PC-3 (cell line): ENCODE measurements at regions of chr7 and their contacts with region 1.

Region 1: GRCh38 chr7:28955718-28956619 is 2.2 kb downstream of the TRIL start:
- DNase-seq: peak; percentile 80
- ATAC-seq: peak; percentile 64
- H3K4me3 ChIP-seq: peak overlapping the region; percentile 80
- H3K27ac ChIP-seq: no peak overlapping the region
- H3K4me1 ChIP-seq: 0 out of 2 replicates have a peak, but pooled peaks cover 9% of the 10 kb centered on the region
- H3K27me3 ChIP-seq: no peaks in the 10 kb centered on the region
- CTCF ChIP-seq: peak; percentile 58

Region 2: DNA sequence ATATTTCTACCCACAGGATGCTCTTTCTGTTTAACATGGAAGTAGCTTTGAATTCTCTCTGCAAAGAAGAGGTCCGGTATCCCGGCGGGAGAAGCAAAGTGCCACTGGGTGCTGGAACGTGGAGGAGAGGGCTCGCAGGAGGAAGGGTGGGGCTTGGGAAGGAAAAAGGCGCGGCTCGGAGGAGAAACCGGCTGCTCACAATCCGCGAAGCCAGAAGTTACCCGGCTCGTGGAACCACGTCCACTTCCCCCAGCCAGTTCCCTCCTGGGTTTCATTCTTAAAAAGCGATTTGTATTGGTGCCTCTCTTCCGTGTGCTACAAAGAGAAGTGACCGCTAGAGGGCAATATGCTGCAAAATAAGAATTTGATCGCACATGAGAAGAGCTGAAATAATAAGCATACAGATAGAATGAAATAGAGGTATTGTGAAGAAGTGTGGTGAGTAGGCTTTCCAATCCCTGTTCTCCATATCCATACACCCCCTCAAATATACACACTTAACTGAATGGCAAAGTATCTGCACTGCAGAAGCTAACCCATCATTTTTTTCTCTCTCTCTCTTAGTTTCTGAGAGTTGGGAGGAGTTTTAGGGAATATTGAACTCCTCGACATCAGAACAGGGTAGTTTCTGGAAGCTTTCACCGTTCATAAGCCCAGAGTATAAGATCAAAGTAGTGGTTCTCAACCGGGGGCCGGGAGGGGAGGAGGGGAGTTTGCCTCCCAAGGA is 28.9 kb before region 1 on chr7:
- CTCF ChIA-PET with region 1: interaction called, 31 read pairs
- POLR2A ChIA-PET with region 1: no interaction called
- intact Hi-C with region 1: loop called (anchors 2 kb)
- DNase-seq: peak; percentile 96
- ATAC-seq: peak; percentile 96
- H3K4me3 ChIP-seq: peak overlapping the region; percentile 75
- H3K27ac ChIP-seq: no peak overlapping the region
- H3K4me1 ChIP-seq: peaks cover 5% of the 10 kb centered on the region; the same call in 1 of the 2 replicates
- H3K27me3 ChIP-seq: no peaks in the 10 kb centered on the region
- CTCF ChIP-seq: peak; percentile 87

Region 3: DNA sequence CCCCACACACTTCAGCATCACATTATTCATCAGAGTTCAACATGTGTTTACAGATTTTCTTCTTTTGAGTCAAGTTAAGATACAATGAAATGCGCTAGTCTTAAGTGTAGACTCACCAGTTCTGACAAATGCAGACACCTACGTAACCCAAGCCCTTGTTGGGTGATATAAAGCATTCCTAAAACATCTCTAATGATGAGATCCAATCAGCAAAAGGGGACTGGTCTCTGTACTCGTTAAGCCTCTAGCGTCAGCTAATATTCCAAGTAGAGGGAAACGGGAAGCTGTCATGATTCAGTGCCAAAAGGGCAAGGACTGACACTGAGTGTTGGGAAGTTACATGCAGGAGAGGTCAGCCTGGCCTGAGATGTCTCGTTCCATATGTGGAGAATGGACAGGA is 40.9 kb after region 1 on chr7:
- CTCF ChIA-PET with region 1: no interaction called
- POLR2A ChIA-PET with region 1: no interaction called
- intact Hi-C with region 1: no loop called
- DNase-seq: no peak
- ATAC-seq: no peak
- H3K4me3 ChIP-seq: no peak overlapping the region
- H3K27ac ChIP-seq: no peak overlapping the region
- H3K4me1 ChIP-seq: no peaks in the 10 kb centered on the region
- H3K27me3 ChIP-seq: no peaks in the 10 kb centered on the region
- CTCF ChIP-seq: no peak

Region 4: DNA sequence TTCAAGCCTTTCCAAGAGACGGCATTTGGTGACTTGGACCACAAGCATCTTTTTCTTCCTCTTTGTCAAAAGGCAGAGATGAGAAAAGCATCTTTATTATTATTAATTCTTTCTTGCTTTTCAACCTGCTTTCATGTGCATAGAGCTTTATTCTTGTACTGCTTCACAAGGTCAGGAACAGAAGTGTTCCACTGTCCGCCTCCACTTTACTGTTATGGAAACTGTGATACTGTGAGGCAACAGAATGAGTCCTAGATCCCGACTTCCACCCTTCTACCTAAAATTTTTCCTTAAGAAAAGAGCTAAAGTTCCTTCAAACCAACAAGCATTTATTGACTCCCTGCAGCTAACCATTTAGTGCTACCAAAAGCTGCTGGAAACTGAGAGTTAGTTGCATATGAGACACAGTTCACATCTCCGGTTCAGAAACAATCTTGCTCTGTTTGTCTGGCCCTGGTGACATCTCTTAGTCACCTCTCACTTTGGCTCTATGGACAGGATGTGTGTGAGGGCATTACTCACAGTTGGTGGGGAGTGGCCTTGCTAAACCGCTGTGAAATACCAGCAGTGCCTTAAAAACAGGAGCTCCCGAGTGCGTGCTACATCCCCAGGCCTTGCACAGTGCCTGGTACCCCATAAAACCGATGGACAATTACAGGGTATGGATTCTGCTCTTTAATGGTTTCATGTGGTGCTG is 79.2 kb after region 1 on chr7:
- CTCF ChIA-PET with region 1: no interaction called
- POLR2A ChIA-PET with region 1: no interaction called
- intact Hi-C with region 1: loop called (anchors 5 kb)
- DNase-seq: peak; percentile 93
- ATAC-seq: peak; percentile 96
- H3K4me3 ChIP-seq: no peak overlapping the region; the same call in 1 of the 2 replicates
- H3K27ac ChIP-seq: peak overlapping the region; percentile 80
- H3K4me1 ChIP-seq: peaks cover 43% of the 10 kb centered on the region
- H3K27me3 ChIP-seq: no peaks in the 10 kb centered on the region
- CTCF ChIP-seq: no peak

Region 5: DNA sequence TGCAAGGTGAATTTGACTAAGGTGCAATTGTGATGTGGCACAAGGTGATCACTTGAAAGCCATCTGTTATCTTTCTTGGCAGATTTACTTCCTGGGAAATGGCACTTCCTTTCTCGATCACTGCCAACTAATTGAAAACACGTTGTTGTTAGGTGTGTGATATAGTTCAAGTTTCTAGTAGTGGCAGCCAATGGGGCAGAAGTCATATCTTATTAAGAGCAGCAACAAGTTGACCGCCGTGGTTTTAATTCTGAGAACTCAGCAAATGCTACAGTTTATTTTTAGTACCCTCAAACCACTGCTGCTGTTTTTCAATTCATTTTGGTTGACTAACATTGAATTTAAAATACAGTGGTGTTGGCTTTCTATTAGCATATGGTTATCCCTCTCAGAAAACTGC is 240.2 kb after region 1 on chr7:
- CTCF ChIA-PET with region 1: no interaction called
- POLR2A ChIA-PET with region 1: no interaction called
- intact Hi-C with region 1: no loop called
- DNase-seq: no peak
- ATAC-seq: no peak
- H3K4me3 ChIP-seq: no peak overlapping the region
- H3K27ac ChIP-seq: no peak overlapping the region
- H3K4me1 ChIP-seq: peaks cover under 1% of the 10 kb centered on the region
- H3K27me3 ChIP-seq: no peaks in the 10 kb centered on the region
- CTCF ChIP-seq: no peak